Lower leg skin (tissue), 4 donors: ENCODE measurements at regions of chr1 and their contacts with region 1.

Region 1: DNA sequence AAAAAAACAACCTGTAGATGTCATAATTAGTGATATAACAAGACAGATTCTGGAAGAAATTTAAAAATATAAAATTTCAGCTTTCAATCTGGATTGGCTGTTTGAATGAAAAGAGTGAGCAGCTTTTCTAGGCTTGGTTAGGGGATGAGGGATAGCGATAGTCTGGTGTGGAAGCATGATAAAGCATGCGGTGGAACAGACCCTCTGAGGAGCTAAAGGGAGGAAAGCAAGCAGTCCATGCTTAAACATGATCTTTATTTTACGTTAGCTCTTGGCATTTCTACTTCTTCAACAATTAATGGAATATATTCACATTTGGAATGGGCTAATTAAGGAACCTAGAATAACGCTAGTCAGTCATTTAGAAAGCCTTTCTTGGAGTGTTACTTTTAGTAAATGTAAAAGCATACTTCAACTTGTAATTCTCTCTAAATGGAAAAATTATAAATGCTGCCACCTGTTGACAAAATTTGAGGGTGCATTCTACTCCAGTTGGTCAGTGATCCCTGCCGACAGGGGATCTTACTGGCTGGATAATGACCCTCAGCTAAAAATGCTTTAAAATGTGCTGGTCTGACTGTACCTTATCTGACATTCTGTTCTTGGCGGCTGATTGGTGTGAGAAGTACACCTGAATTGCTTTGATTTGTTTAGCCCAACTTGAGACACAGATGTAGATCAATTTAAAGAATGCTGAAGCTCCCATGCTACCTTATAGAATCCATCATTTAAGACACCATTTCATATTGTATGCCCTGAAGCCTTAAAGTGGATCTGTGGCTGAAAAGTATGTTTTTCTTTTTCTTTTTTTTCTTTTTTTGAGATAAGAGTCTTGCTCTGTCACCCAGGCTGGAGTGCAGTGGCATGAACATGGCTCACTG is 61.2 kb downstream of the AK4 start:
- DNase-seq: peak in 1 of 2 donors; percentile 43
- H3K4me3 ChIP-seq: no peak overlapping the region
- CTCF ChIP-seq: no peak
- POLR2A ChIP-seq: no peak

Region 2: DNA sequence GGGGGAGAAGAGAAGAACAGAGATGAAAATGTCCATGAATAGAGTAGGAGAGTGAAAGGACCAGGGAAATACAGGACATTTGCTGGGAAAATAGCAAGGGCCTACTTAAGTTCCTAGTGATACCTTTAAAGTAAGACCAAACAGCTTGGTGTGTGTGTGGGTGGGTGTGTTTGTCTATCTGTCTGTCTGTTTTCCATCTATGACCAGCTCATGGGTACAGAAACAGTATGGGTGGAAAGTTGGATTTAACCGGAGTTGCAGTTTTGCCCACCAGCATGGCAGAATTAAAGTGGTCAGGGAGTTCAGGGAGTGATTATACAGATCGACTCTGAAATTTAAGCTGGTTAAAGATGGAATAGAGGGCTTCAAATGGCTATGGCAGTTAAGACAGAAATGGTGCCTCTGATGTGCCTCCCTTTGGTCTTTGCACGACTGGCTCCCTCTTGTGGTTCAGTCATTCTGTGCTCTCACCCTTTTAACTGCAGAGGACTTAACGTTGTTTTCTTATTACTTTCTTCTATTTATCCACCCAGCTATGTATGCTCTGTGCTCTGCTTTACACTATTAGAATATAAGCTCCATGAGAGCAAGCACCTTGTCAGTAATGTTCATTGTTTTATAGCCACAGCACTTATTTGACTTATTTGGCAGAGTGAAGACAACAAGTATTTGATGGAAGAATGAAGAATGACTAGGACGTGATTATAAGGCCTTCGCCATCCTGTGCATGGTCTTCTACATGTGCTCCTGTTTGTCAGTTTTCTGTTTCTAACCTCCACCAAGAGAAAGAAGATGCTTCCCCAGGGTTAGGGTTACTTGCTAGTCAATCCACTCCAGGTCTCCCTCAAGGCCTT is 133.9 kb before region 1 on chr1:
- intact Hi-C with region 1: loop called (anchors 10 kb)
- DNase-seq: peak in 1 of 2 donors; percentile 35
- H3K4me3 ChIP-seq: no peak overlapping the region
- CTCF ChIP-seq: peak in 1 of 3 donors; percentile 14
- POLR2A ChIP-seq: no peak

Region 3: DNA sequence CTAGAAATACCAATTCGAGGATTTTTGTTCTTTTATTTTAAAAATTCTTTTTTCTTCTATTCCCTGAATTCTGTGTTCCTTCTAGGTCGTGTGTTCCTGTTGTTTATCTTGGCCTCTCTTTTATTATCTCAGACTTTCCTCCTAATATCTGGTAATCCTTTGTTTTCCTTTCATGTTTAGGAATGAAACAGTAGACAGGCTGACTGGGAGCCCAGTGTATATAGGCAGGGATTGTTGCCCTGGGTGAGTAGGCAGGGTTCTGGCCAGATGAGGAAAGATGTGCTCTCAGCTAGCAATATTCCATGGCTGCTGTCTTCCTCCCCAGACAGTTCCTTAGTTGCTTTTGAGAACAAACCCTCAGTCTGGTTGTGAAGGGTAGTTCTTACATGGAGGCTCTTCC is 421.6 kb after region 1 on chr1:
- intact Hi-C with region 1: no loop called
- DNase-seq: no peak
- H3K4me3 ChIP-seq: no peak overlapping the region
- CTCF ChIP-seq: no peak
- POLR2A ChIP-seq: no peak